ENCODE measurements at regions of chr5 and their contacts with region 1.

Region 1: DNA sequence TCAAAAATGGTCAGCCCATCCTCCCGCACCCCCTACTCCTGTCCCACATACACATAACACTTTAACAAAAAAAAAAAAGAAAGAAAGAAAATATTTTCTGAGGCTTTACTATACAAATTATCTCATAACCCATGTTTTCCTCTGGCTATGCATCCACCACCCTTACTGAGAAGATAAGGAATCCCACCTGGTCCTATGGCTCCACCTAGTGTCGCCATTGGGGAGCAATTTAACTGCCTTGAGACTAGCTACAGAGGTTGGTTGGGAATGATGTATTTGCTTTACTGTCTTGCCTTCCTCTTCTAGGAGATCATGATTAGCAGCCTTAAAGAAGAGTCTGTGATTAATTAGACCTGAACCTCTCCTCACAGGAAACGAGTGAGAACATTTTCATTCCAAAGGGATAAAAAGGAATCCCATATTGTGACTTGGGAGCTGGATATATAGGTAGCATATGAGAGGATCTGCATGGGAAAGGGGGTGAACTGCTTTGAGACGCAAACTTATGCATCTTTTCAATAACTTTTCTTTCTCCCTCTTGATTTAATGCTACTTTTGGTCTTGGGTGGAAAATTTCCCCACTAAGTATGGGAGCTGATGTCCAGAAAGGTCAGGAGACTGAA is 77.7 kb upstream of the SELENOP start:
- DNase-seq: peak; percentile 83 to 94 (median 86)
- ATAC-seq: peak; percentile 96
- H3K4me3 ChIP-seq: no peak overlapping the region
- H3K27ac ChIP-seq: no peak overlapping the region
- H3K4me1 ChIP-seq: peaks cover 0 to 7% of the 10 kb centered on the region in 2 experiments; a peak in 2 of 5 replicates
- H3K27me3 ChIP-seq: no peaks in the 10 kb centered on the region; a peak in 1 of 5 replicates
- CTCF ChIP-seq: peak; percentile 92 to 98 (median 94)
- EP300 ChIP-seq: peak; percentile 56; the same call in 1 of the 2 replicates
- POLR2A ChIP-seq: no peak
- RAD21 ChIP-seq: peak; percentile 97 to 99

Region 2: GRCh38 chr5:42423285-42424165 is 465.9 kb before region 1 on chr5 and contains the start of gene GHR:
- CTCF ChIA-PET with region 1: no interaction called
- POLR2A ChIA-PET with region 1: no interaction called
- in situ Hi-C with region 1: no loop called
- intact Hi-C with region 1: loop called (anchors 10 kb)
- DNase-seq: peak; percentile 35 to 66 (median 42)
- ATAC-seq: peak; percentile 98
- H3K4me3 ChIP-seq: peak within 1 kb of the TSS; percentile 25; the same call in 1 of the 2 replicates
- H3K27ac ChIP-seq: no peak within 1 kb of the TSS
- H3K4me1 ChIP-seq: peaks cover 0 to 14% of the 10 kb centered on the region in 2 experiments; a peak in 2 of 5 replicates
- H3K27me3 ChIP-seq: peaks cover 0 to 7% of the 10 kb centered on the region in 2 experiments; a peak in 2 of 5 replicates
- CTCF ChIP-seq: peak; percentile 53 to 64 (median 60)
- EP300 ChIP-seq: no peak
- POLR2A ChIP-seq: no peak
- RAD21 ChIP-seq: peak; percentile 39 to 54; a peak in 3 of 4 replicates
- polyA plus RNA-seq, gene GHR: 0.01 to 0.04 TPM

Region 3: DNA sequence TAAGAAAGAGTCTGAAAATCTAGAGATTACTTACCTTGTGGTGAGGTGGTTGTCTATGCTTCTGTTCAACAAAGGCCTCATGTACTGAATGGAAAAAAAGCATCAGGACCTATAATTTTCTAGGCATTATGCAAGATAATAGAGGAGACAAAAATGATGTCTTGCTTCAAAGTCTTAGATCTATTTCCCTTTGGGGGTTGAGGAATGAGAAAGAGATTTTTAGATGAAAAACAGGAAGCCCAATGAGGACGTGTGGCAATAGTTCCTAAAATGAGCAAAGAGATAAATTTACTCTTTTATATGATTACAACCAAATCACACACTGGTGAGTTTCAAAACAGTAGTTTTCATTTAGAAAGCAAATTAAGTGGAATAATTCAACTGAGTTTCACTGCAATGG is 366.6 kb before region 1 on chr5:
- CTCF ChIA-PET with region 1: no interaction called
- POLR2A ChIA-PET with region 1: no interaction called
- in situ Hi-C with region 1: no loop called
- intact Hi-C with region 1: no loop called
- DNase-seq: no peak
- ATAC-seq: no peak
- H3K4me3 ChIP-seq: no peak overlapping the region
- H3K27ac ChIP-seq: no peak overlapping the region
- H3K4me1 ChIP-seq: no peaks in the 10 kb centered on the region
- H3K27me3 ChIP-seq: no peaks in the 10 kb centered on the region
- CTCF ChIP-seq: no peak
- EP300 ChIP-seq: no peak
- POLR2A ChIP-seq: no peak
- RAD21 ChIP-seq: no peak

Region 4: GRCh38 chr5:42656651-42657015 is 232.8 kb before region 1 on chr5:
- CTCF ChIA-PET with region 1: no interaction called
- POLR2A ChIA-PET with region 1: no interaction called
- in situ Hi-C with region 1: no loop called
- intact Hi-C with region 1: loop called (anchors 10 kb)
- DNase-seq: no peak
- ATAC-seq: no peak
- H3K4me3 ChIP-seq: no peak overlapping the region
- H3K27ac ChIP-seq: no peak overlapping the region
- H3K4me1 ChIP-seq: no peaks in the 10 kb centered on the region
- H3K27me3 ChIP-seq: no peaks in the 10 kb centered on the region; a peak in 1 of 5 replicates
- CTCF ChIP-seq: peak in 2 of 3 experiments; percentile 7 to 42; a peak in 3 of 6 replicates
- EP300 ChIP-seq: no peak
- POLR2A ChIP-seq: no peak
- RAD21 ChIP-seq: peak; percentile 36 to 57

Region 5: GRCh38 chr5:42767491-42768105 is 121.8 kb before region 1 on chr5:
- CTCF ChIA-PET with region 1: interaction called, 9 read pairs
- POLR2A ChIA-PET with region 1: no interaction called
- in situ Hi-C with region 1: no loop called
- intact Hi-C with region 1: loop called (anchors 1 kb)
- DNase-seq: peak in 3 of 4 experiments; percentile 13 to 51 (median 26)
- ATAC-seq: peak; percentile 81
- H3K4me3 ChIP-seq: no peak overlapping the region
- H3K27ac ChIP-seq: no peak overlapping the region
- H3K4me1 ChIP-seq: no peaks in the 10 kb centered on the region
- H3K27me3 ChIP-seq: no peaks in the 10 kb centered on the region
- CTCF ChIP-seq: peak; percentile 40 to 79 (median 46); a peak in 3 of 6 replicates
- EP300 ChIP-seq: no peak
- POLR2A ChIP-seq: no peak
- RAD21 ChIP-seq: peak; percentile 90 to 91

Measured in K562 (cell line).